GM12878 (cell line): ENCODE measurements at regions of chr9 and their contacts with region 1.

Region 1: DNA sequence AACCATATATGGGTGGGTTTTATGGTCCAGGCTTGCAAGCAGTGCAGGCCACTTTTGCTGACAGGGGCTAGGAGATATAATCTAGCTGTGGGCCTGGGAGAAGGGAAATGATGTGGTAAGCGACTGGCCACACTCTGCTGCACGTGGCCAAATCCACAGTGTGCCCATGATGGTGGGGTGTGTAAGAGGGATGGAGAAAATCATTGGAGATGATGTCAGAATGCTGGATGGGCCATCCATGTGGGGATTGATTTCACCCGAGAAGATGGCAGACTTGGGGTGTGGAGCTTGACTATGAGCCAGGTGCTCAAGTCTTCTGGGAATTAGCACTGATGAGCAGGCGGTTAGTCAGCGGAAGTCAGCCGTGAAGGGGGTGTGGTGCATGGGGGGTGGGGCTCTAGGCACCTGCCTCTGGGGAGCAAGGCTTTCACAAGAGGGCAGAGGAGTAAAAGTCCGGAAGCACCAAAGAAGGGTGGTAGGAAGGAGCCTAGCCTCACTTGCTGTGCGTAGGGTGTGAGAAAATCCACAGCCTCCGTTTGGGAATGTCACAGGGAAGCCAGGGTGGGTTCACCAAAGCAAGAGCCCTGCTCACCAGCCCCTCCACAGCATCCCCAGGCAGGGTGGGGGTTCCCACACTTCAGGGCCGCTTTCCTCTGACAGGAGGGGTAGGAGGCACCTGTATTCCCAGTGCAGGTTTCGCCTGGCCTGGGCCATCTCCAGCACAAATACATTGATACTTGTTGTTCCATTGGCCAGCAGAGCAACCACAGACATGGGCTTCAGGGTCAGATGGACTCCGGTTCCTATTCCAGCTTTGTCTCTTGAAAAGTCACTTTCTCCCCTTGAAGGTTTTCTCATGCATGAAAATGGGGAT is 44.5 kb upstream of the ANGPTL2 start:
- DNase-seq: peak; percentile 94
- ATAC-seq: peak; percentile 84
- H3K4me3 ChIP-seq: no peak overlapping the region
- H3K27ac ChIP-seq: peak overlapping the region; percentile 79
- H3K4me1 ChIP-seq: peaks cover 36% of the 10 kb centered on the region
- H3K27me3 ChIP-seq: no peaks in the 10 kb centered on the region
- CTCF ChIP-seq: no peak
- EP300 ChIP-seq: peak; percentile 81 to 94
- POLR2A ChIP-seq: peak; percentile 63
- RAD21 ChIP-seq: no peak

Region 2: GRCh38 chr9:126965541-126966428 is 201.1 kb before region 1 on chr9:
- CTCF ChIA-PET with region 1: interaction called, 22 read pairs
- POLR2A ChIA-PET with region 1: interaction called, 6 read pairs
- RAD21 ChIA-PET with region 1: interaction called, 30 read pairs
- SMC1A ChIA-PET with region 1: interaction called, 71 read pairs
- in situ Hi-C with region 1: no loop called
- intact Hi-C with region 1: loop called (anchors 1 kb)
- DNase-seq: no peak
- ATAC-seq: peak; percentile 99
- H3K4me3 ChIP-seq: no peak overlapping the region
- H3K27ac ChIP-seq: no peak overlapping the region
- H3K4me1 ChIP-seq: no peaks in the 10 kb centered on the region
- H3K27me3 ChIP-seq: no peaks in the 10 kb centered on the region
- CTCF ChIP-seq: peak; percentile 82 to 84 (median 83)
- EP300 ChIP-seq: no peak
- POLR2A ChIP-seq: no peak
- RAD21 ChIP-seq: peak; percentile 95

Region 3: GRCh38 chr9:127004946-127005769 is 161.7 kb before region 1 on chr9:
- CTCF ChIA-PET with region 1: interaction called, 27 read pairs
- POLR2A ChIA-PET with region 1: interaction called, 51 read pairs
- RAD21 ChIA-PET with region 1: interaction called, 157 read pairs
- SMC1A ChIA-PET with region 1: interaction called, 188 read pairs
- in situ Hi-C with region 1: no loop called
- intact Hi-C with region 1: loop called (anchors 1 kb)
- DNase-seq: peak; percentile 98
- ATAC-seq: peak; percentile 85
- H3K4me3 ChIP-seq: peak overlapping the region; percentile 4; the same call in 1 of the 2 replicates
- H3K27ac ChIP-seq: peak overlapping the region; percentile 77
- H3K4me1 ChIP-seq: peaks cover 54% of the 10 kb centered on the region
- H3K27me3 ChIP-seq: no peaks in the 10 kb centered on the region
- CTCF ChIP-seq: no peak
- EP300 ChIP-seq: peak; percentile 99
- POLR2A ChIP-seq: no peak
- RAD21 ChIP-seq: peak; percentile 32

Region 4: DNA sequence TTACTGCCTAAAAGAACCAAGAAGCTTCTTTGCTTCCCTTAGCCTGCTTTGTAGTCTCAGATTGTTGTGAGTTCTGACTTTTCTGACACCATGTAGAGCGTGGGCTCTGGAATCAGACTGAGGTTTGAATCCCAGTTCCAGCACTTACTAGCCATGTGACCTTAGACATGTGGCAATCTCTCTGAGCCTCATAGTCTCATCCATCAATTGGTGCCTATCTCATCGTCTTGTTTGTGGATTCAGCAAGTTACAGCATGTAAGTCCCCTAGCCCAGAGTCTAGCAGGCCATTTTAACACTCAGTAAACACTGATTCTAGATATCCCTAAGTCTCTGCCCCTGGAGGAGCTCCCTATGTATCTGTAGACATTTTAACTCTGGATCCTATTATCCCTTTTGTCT is 139.2 kb before region 1 on chr9:
- CTCF ChIA-PET with region 1: no interaction called
- POLR2A ChIA-PET with region 1: no interaction called
- RAD21 ChIA-PET with region 1: no interaction called
- SMC1A ChIA-PET with region 1: no interaction called
- in situ Hi-C with region 1: no loop called
- intact Hi-C with region 1: no loop called
- DNase-seq: no peak
- ATAC-seq: no peak
- H3K4me3 ChIP-seq: no peak overlapping the region
- H3K27ac ChIP-seq: no peak overlapping the region
- H3K4me1 ChIP-seq: no peaks in the 10 kb centered on the region
- H3K27me3 ChIP-seq: no peaks in the 10 kb centered on the region
- CTCF ChIP-seq: no peak
- EP300 ChIP-seq: no peak
- POLR2A ChIP-seq: no peak
- RAD21 ChIP-seq: no peak

Region 5: GRCh38 chr9:127065592-127065991 is 101.3 kb before region 1 on chr9:
- CTCF ChIA-PET with region 1: interaction called, 11 read pairs
- POLR2A ChIA-PET with region 1: interaction called, 38 read pairs
- RAD21 ChIA-PET with region 1: interaction called, 59 read pairs
- SMC1A ChIA-PET with region 1: interaction called, 71 read pairs
- in situ Hi-C with region 1: no loop called
- intact Hi-C with region 1: no loop called
- DNase-seq: no peak
- ATAC-seq: no peak
- H3K4me3 ChIP-seq: no peak overlapping the region
- H3K27ac ChIP-seq: no peak overlapping the region
- H3K4me1 ChIP-seq: no peaks in the 10 kb centered on the region
- H3K27me3 ChIP-seq: no peaks in the 10 kb centered on the region
- CTCF ChIP-seq: no peak
- EP300 ChIP-seq: no peak
- POLR2A ChIP-seq: no peak
- RAD21 ChIP-seq: no peak

Region 6: DNA sequence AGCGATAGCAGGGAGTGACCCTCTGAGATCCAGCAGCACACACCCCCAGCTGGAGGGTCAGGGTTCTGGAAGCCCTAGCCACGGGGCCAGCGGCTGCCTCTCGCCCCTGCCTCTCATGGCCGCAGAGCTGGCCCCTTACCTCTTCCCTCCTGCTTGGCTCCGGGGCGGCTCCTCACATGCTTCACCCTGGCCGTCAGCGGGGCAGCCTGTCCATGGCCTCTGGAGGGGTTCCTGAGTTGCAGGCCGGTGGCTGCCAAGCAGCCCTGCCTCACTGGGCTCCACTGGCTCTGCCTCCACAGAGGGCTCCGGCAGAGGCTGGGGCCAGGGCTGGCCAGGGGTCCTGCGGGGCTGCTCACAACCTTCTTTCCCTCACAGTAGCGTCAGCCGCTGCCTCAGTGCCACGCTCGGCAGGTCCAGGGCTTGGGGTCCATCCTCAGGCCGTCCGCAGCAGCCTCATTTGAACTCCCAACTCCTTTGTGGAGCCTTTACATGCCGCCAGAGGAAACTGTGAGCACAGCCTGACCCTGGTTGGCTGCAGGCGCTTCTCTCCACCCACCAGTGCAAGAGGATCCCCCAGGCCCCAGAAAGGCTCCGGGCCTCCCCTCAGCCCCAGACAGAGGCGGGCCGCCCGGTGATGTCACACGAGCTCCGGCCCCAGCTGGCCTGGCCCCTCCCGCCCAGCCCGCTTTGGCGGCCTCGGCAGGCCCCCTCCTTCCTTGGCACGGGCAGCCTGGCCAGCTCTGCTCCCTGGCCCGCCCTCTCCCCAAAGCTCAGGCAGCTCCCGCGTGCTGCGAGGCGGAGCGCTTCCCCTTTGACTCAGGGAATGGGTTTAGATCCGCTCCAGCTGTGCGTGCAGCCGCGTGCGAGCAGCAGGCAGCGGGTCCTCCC is 44.5 kb before region 1 on chr9 and contains the start of gene ANGPTL2:
- CTCF ChIA-PET with region 1: interaction called, 18 read pairs
- POLR2A ChIA-PET with region 1: interaction called, 5 read pairs
- RAD21 ChIA-PET with region 1: interaction called, 54 read pairs
- SMC1A ChIA-PET with region 1: interaction called, 68 read pairs
- in situ Hi-C with region 1: no loop called
- intact Hi-C with region 1: loop called (anchors 5 kb)
- DNase-seq: no peak
- ATAC-seq: peak; percentile 55
- H3K4me3 ChIP-seq: no peak within 1 kb of the TSS
- H3K27ac ChIP-seq: no peak within 1 kb of the TSS
- H3K4me1 ChIP-seq: peaks cover 16% of the 10 kb centered on the region
- H3K27me3 ChIP-seq: no peaks in the 10 kb centered on the region
- CTCF ChIP-seq: no peak
- EP300 ChIP-seq: no peak
- POLR2A ChIP-seq: no peak
- RAD21 ChIP-seq: no peak
- polyA plus RNA-seq, gene ANGPTL2: 0.13 to 0.38 TPM

Region 7: DNA sequence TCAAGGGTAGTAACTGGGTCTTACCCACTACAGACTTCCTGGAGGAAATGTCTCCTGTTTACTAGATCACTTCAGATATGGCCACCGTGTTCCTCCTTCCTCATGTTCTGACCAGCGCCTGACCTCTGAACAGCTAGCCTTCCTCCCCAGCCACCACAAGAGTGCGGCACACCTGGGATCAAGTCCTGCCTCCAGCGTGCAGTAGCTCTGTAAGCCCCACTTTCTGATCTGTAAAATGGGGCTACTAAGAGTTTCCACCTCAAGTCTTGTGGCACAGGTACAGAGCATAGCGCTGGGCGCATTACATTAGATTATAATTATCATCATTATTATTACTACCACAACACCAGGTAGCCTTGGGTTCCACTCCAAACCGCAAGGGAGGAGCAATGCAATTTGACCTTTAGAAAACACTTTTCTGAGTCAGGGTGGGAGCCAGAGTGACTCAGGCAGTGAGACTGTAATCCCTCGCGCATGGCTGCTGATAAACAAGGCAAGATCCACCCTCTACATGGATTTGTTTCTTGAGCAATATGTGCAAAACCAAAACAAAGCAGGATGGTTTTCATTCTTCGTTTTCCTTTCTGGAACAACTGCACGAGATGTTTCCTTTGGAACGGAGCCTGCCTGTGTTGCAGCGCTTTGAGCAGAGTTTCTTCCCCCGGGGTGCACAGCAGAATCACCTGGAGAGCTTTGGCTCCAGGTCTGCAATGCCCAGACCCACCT is 20.5 kb after region 1 on chr9:
- CTCF ChIA-PET with region 1: interaction called, 174 read pairs
- POLR2A ChIA-PET with region 1: interaction called, 270 read pairs
- RAD21 ChIA-PET with region 1: interaction called, 515 read pairs
- SMC1A ChIA-PET with region 1: interaction called, 812 read pairs
- in situ Hi-C with region 1: no loop called
- intact Hi-C with region 1: loop called (anchors 1 kb)
- DNase-seq: no peak
- ATAC-seq: no peak
- H3K4me3 ChIP-seq: no peak overlapping the region
- H3K27ac ChIP-seq: no peak overlapping the region
- H3K4me1 ChIP-seq: peaks cover 26% of the 10 kb centered on the region
- H3K27me3 ChIP-seq: no peaks in the 10 kb centered on the region
- CTCF ChIP-seq: no peak
- EP300 ChIP-seq: no peak
- POLR2A ChIP-seq: no peak
- RAD21 ChIP-seq: no peak

Region 8: GRCh38 chr9:127347831-127348779 is 181.2 kb after region 1 on chr9:
- CTCF ChIA-PET with region 1: no interaction called
- POLR2A ChIA-PET with region 1: no interaction called
- RAD21 ChIA-PET with region 1: no interaction called
- SMC1A ChIA-PET with region 1: no interaction called
- in situ Hi-C with region 1: no loop called
- intact Hi-C with region 1: no loop called
- DNase-seq: no peak
- ATAC-seq: peak; percentile 50
- H3K4me3 ChIP-seq: no peak overlapping the region
- H3K27ac ChIP-seq: no peak overlapping the region
- H3K4me1 ChIP-seq: no peaks in the 10 kb centered on the region
- H3K27me3 ChIP-seq: no peaks in the 10 kb centered on the region
- CTCF ChIP-seq: peak; percentile 42 to 50 (median 45); a peak in 5 of 6 replicates
- EP300 ChIP-seq: no peak
- POLR2A ChIP-seq: no peak
- RAD21 ChIP-seq: peak; percentile 67

Region 9: GRCh38 chr9:127463911-127464310 is 297.0 kb after region 1 on chr9:
- CTCF ChIA-PET with region 1: no interaction called
- POLR2A ChIA-PET with region 1: no interaction called
- RAD21 ChIA-PET with region 1: no interaction called
- SMC1A ChIA-PET with region 1: no interaction called
- in situ Hi-C with region 1: no loop called
- intact Hi-C with region 1: no loop called
- DNase-seq: no peak
- ATAC-seq: no peak
- H3K4me3 ChIP-seq: no peak overlapping the region
- H3K27ac ChIP-seq: no peak overlapping the region
- H3K4me1 ChIP-seq: no peaks in the 10 kb centered on the region
- H3K27me3 ChIP-seq: no peaks in the 10 kb centered on the region
- CTCF ChIP-seq: no peak
- EP300 ChIP-seq: no peak
- POLR2A ChIP-seq: no peak
- RAD21 ChIP-seq: no peak